GM12878 (cell line): ENCODE measurements at regions of chr7 and their contacts with region 1.

Region 1: GRCh38 chr7:73851410-73852234 is 9.3 kb upstream of the METTL27 start:
- DNase-seq: peak; percentile 41
- ATAC-seq: peak; percentile 91
- H3K4me3 ChIP-seq: no peak overlapping the region
- H3K27ac ChIP-seq: no peak overlapping the region
- H3K4me1 ChIP-seq: peaks cover 20% of the 10 kb centered on the region
- H3K27me3 ChIP-seq: no peaks in the 10 kb centered on the region
- CTCF ChIP-seq: no peak
- EP300 ChIP-seq: no peak
- POLR2A ChIP-seq: no peak
- RAD21 ChIP-seq: no peak

Region 2: DNA sequence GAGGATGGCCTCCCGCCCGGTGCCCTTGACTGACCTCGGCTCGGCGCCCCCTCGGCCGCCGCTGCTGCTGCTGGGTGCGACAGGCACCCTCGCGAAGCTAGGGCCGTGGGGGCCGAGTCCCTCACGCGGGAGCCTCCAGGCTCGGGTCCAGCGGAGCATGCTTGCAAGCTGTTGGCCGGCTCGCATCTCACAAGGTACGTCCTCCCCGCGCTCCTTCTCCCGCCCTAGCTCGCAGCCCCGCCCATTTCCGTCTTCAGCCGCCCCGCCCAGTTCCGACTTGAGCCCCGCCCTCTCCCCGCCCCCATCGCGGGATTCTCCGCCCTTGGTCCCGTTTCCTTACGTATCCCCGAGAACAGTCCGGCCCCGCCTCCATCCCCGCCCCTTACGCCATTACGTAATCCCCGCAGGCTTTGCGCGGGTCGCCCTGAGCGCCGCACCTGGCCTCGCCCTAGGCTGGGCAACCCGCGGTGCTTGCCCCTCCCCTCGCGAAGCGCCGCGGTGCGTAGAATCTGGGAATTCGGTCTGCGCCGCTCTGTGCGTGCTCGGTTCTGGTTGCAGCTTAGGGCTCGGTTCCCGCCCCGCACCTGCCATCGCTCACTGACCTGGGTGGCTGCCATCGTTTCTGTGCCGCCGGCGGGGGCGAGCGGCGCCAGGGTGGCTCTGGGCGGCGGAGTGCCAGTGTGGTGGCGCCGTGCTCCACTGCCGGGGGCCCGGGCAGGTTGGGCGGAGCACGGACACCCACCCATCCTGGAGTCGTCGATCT is 112.8 kb before region 1 on chr7 and contains the start of gene ABHD11:
- CTCF ChIA-PET with region 1: interaction called, 9 read pairs
- POLR2A ChIA-PET with region 1: no interaction called
- RAD21 ChIA-PET with region 1: interaction called, 7 read pairs
- SMC1A ChIA-PET with region 1: interaction called, 4 read pairs
- in situ Hi-C with region 1: no loop called
- intact Hi-C with region 1: loop called (anchors 2 kb)
- DNase-seq: peak; percentile 90
- ATAC-seq: peak; percentile 89
- H3K4me3 ChIP-seq: peak within 1 kb of the TSS; percentile 92
- H3K27ac ChIP-seq: peak within 1 kb of the TSS; percentile 79
- H3K4me1 ChIP-seq: no peaks in the 10 kb centered on the region; the same call in 1 of the 2 replicates
- H3K27me3 ChIP-seq: no peaks in the 10 kb centered on the region
- CTCF ChIP-seq: no peak
- EP300 ChIP-seq: no peak
- POLR2A ChIP-seq: peak; percentile 92
- RAD21 ChIP-seq: no peak
- polyA plus RNA-seq, gene ABHD11: 2.8 to 5.6 TPM

Region 3: DNA sequence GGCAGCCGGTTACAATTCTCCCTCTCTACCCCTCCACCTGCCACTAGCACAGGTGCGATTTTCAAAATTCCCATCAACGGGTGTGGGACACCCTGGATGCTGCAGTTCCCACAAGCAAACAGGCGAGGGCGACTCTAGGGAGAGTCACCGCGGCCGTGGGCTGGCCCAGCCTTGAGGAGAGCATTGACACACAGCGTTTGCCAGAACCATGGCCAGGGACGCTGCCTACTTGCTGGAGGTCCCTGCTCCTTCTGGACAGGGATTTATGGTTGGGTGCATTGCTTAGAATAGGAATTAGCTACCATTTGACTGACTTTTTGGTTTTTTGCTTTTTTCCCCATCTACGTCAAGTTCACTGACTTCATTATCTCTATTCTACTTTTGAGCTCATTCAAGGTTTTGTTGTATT is 39.9 kb before region 1 on chr7:
- CTCF ChIA-PET with region 1: interaction called, 20 read pairs
- POLR2A ChIA-PET with region 1: no interaction called
- RAD21 ChIA-PET with region 1: interaction called, 11 read pairs
- SMC1A ChIA-PET with region 1: interaction called, 10 read pairs
- in situ Hi-C with region 1: no loop called
- intact Hi-C with region 1: loop called (anchors 1 kb)
- DNase-seq: no peak
- ATAC-seq: peak; percentile 91
- H3K4me3 ChIP-seq: no peak overlapping the region
- H3K27ac ChIP-seq: no peak overlapping the region
- H3K4me1 ChIP-seq: no peaks in the 10 kb centered on the region
- H3K27me3 ChIP-seq: no peaks in the 10 kb centered on the region
- CTCF ChIP-seq: peak; percentile 64 to 87 (median 83)
- EP300 ChIP-seq: no peak
- POLR2A ChIP-seq: no peak
- RAD21 ChIP-seq: peak; percentile 67

Region 4: DNA sequence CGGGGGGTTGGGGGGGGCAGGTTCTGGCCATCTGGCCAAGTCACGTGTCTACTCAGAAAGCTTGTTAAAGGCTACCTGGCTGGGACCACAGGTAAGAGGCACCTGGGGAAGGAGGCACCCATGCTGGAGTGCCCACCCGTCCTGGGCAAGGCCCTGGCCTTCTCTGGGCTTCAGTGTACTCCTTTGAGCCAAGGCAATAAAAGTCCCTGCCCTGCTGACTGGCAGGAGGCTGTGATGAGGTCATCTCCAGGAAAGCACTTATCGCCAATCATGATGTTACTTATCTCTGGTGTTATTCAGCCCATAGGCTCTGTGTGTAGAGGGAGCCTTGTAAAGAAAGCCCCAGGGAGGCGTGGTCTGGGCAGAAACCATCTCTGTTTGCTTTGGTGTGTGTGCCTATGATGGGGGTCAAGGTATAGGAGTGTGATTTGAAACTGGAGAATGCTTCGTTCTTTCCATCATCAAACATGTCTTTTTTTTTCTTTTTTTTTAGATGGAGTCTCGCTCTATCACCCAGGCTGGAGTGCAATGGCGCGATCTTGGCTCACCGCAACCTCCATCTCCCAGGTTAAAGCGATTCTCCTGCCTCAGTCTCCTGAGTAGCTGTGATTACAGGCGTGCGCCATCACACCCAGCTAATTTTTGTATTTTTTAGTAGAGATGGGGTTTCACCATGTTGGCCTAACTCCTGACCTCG is 23.4 kb before region 1 on chr7:
- CTCF ChIA-PET with region 1: interaction called, 11 read pairs
- POLR2A ChIA-PET with region 1: no interaction called
- RAD21 ChIA-PET with region 1: interaction called, 10 read pairs
- SMC1A ChIA-PET with region 1: interaction called, 11 read pairs
- in situ Hi-C with region 1: no loop called
- intact Hi-C with region 1: no loop called
- DNase-seq: no peak
- ATAC-seq: peak; percentile 69
- H3K4me3 ChIP-seq: no peak overlapping the region
- H3K27ac ChIP-seq: no peak overlapping the region
- H3K4me1 ChIP-seq: peaks cover 12% of the 10 kb centered on the region
- H3K27me3 ChIP-seq: peaks cover 0 to 2% of the 10 kb centered on the region in 2 experiments; a peak in 1 of 4 replicates
- CTCF ChIP-seq: no peak
- EP300 ChIP-seq: no peak
- POLR2A ChIP-seq: no peak
- RAD21 ChIP-seq: no peak